K562 (cell line): ENCODE measurements at regions of chr2 and their contacts with region 1.

Region 1: GRCh38 chr2:128736689-128737545 is 418.2 kb upstream of the HS6ST1 start:
- DNase-seq: peak; percentile 78 to 88 (median 84)
- ATAC-seq: peak; percentile 96
- H3K4me3 ChIP-seq: no peak overlapping the region
- H3K27ac ChIP-seq: no peak overlapping the region
- H3K4me1 ChIP-seq: peaks cover 0 to 10% of the 10 kb centered on the region in 2 experiments; a peak in 2 of 5 replicates
- H3K27me3 ChIP-seq: peaks cover 4 to 41% of the 10 kb centered on the region in 2 experiments; a peak in 2 of 5 replicates
- CTCF ChIP-seq: peak; percentile 82 to 93 (median 88)
- EP300 ChIP-seq: no peak
- POLR2A ChIP-seq: no peak
- RAD21 ChIP-seq: peak; percentile 62 to 68

Region 2: GRCh38 chr2:129212299-129212958 is 475.5 kb after region 1 on chr2:
- CTCF ChIA-PET with region 1: no interaction called
- POLR2A ChIA-PET with region 1: no interaction called
- in situ Hi-C with region 1: no loop called
- intact Hi-C with region 1: no loop called
- DNase-seq: no peak
- ATAC-seq: no peak
- H3K4me3 ChIP-seq: no peak overlapping the region
- H3K27ac ChIP-seq: no peak overlapping the region
- H3K4me1 ChIP-seq: no peaks in the 10 kb centered on the region
- H3K27me3 ChIP-seq: no peaks in the 10 kb centered on the region; a peak in 2 of 5 replicates
- CTCF ChIP-seq: no peak
- EP300 ChIP-seq: no peak
- POLR2A ChIP-seq: no peak
- RAD21 ChIP-seq: no peak

Region 3: GRCh38 chr2:129396980-129397599 is 660.2 kb after region 1 on chr2:
- CTCF ChIA-PET with region 1: interaction called, 3 read pairs
- POLR2A ChIA-PET with region 1: no interaction called
- in situ Hi-C with region 1: no loop called
- intact Hi-C with region 1: loop called (anchors 10 kb)
- DNase-seq: peak; percentile 14 to 47 (median 25)
- ATAC-seq: peak; percentile 77
- H3K4me3 ChIP-seq: no peak overlapping the region
- H3K27ac ChIP-seq: no peak overlapping the region
- H3K4me1 ChIP-seq: no peaks in the 10 kb centered on the region
- H3K27me3 ChIP-seq: no peaks in the 10 kb centered on the region
- CTCF ChIP-seq: peak; percentile 62 to 70 (median 67)
- EP300 ChIP-seq: no peak
- POLR2A ChIP-seq: no peak
- RAD21 ChIP-seq: peak; percentile 51 to 61

Region 4: DNA sequence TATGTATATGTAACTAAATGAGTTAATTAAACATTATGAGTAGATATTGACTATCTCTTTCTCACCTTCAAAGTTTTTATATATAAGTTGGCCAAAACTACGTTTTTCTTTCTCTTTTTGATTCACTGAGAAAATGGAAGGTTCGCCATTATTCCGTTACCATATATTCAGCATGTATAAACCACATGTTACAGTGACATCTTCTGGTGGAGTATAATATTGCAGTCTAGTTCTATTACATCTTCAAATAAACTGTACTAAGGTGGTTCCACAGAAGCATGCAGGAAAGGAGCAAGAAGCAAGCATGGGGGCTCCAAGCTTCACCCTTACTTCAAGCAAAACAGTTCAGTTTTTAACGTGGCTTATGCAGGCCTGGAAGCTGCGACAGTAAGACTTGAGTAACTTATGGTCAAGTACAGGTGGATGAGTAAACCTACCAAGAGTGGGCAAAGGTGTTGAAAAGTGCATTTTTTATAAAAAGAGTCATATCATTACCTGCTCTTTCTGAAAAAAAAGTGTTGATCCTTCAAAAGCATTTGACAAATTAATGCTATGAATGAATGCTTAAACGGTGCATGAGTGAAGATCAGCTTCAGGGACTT is 1112.7 kb after region 1 on chr2:
- CTCF ChIA-PET with region 1: no interaction called
- POLR2A ChIA-PET with region 1: no interaction called
- in situ Hi-C with region 1: no loop called
- intact Hi-C with region 1: loop called (anchors 1 kb)
- DNase-seq: peak; percentile 39 to 71 (median 44)
- ATAC-seq: peak; percentile 84
- H3K4me3 ChIP-seq: no peak overlapping the region
- H3K27ac ChIP-seq: no peak overlapping the region
- H3K4me1 ChIP-seq: no peaks in the 10 kb centered on the region
- H3K27me3 ChIP-seq: no peaks in the 10 kb centered on the region; a peak in 1 of 5 replicates
- CTCF ChIP-seq: peak; percentile 30 to 73 (median 52); a peak in 4 of 6 replicates
- EP300 ChIP-seq: no peak
- POLR2A ChIP-seq: no peak
- RAD21 ChIP-seq: peak; percentile 72 to 79